Psoas muscle (tissue), 8 donors: ENCODE measurements at regions of chr11 and their contacts with region 1.

Region 1: DNA sequence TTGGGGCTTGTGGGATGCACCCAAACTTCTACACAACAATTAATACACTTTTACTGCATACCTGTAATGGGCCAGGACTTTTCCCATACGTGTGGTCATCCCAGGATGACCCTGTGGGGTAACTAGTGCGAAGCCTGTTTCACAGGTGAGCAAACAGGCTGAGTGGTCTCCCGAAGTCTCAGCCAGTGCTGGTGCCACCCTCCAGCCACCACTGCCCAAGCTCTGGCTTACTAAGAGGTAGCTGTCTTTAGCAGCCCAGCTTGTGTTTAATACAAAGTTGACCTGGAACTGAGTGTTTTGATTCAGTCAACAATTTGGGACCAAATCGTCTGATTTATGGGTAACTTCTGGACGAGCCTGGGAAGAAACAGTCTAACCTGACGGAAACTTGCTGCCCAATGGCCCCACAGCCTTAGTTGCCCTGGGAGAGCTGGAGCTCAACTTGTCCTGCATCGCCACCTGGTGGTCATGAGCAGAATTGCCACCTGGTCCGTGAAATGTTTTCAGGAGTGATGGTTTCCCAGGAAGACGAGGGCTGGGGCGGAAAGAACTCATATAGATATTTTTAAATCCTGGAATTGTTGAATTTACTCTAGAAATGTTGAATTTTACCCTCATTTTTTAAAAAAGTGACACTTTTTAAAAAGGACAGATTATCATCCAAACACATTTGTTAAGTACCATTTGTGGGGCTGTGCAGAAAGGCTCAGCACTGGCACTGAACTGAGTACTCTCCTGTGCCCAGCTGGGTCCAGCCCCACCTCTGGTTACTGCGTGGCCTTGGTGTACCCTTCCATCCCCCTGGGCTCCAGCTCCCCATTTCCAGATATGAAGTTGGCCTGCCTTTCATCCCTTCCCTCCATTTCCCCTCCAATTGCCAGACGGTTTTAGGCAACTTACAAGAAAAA is 95.5 kb upstream of the PARVA start:
- DNase-seq: peak; percentile 81 to 90
- ATAC-seq: peak; percentile 78 to 92 (median 84)
- H3K4me3 ChIP-seq: no peak overlapping the region
- H3K27ac ChIP-seq: no peak overlapping the region
- H3K4me1 ChIP-seq: peaks cover 4% of the 10 kb centered on the region
- H3K27me3 ChIP-seq: no peaks in the 10 kb centered on the region
- CTCF ChIP-seq: peak; percentile 98

Region 2: DNA sequence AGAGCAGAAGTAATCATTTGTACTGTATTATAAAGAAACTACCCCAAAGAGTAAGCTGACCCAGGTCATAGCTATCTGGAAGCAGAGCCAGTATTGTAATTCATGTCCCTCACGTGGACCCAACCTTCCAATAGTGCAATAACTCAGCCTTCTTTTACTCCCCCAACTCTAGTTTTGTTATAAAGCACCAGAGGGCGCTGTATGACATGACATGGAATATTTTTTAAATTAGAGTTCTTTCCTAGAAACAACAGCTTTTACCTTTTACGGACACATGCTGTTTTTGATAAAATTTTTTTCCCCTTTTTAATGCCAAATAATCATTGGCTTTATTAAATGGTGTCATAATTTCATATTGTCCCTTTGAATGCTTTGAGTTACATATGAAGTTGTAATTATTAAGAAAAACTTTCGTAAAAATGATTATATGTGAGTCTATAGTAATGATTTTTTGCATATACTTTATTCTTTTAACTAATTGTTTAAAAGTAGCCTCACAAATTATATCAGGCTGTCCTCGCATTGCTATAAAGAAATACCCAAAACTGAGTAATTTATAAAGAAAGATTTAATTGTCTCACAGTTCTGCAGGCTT is 350.3 kb before region 1 on chr11:
- intact Hi-C with region 1: loop called in 1 of 2 experiments (anchors 10 kb)
- DNase-seq: no peak
- ATAC-seq: peak; percentile 32 to 76 (median 71)
- H3K4me3 ChIP-seq: no peak overlapping the region
- H3K27ac ChIP-seq: no peak overlapping the region
- H3K4me1 ChIP-seq: no peaks in the 10 kb centered on the region
- H3K27me3 ChIP-seq: no peaks in the 10 kb centered on the region
- CTCF ChIP-seq: peak; percentile 62